ENCODE measurements at regions of chr9 and their contacts with region 1.

Region 1: GRCh38 chr9:272251-273213 is 57.9 kb downstream of the DOCK8 start:
- DNase-seq: peak; percentile 36 to 92 (median 72)
- ATAC-seq: peak; percentile 86 to 95 (median 94)
- H3K4me3 ChIP-seq: peak overlapping the region; percentile 71 to 72
- H3K4me3 Mint-ChIP-seq: peak overlapping the region; percentile 73 to 94 (median 90)
- H3K27ac ChIP-seq: peak overlapping the region; percentile 98
- H3K27ac Mint-ChIP-seq: peak overlapping the region; percentile 85 to 96
- H3K4me1 ChIP-seq: peaks cover 34 to 48% of the 10 kb centered on the region in 2 experiments
- H3K4me1 Mint-ChIP-seq: peaks cover 45 to 65% (median 51%) of the 10 kb centered on the region in 3 donors
- H3K27me3 ChIP-seq: no peaks in the 10 kb centered on the region
- H3K27me3 Mint-ChIP-seq: no peaks in the 10 kb centered on the region

Region 2: DNA sequence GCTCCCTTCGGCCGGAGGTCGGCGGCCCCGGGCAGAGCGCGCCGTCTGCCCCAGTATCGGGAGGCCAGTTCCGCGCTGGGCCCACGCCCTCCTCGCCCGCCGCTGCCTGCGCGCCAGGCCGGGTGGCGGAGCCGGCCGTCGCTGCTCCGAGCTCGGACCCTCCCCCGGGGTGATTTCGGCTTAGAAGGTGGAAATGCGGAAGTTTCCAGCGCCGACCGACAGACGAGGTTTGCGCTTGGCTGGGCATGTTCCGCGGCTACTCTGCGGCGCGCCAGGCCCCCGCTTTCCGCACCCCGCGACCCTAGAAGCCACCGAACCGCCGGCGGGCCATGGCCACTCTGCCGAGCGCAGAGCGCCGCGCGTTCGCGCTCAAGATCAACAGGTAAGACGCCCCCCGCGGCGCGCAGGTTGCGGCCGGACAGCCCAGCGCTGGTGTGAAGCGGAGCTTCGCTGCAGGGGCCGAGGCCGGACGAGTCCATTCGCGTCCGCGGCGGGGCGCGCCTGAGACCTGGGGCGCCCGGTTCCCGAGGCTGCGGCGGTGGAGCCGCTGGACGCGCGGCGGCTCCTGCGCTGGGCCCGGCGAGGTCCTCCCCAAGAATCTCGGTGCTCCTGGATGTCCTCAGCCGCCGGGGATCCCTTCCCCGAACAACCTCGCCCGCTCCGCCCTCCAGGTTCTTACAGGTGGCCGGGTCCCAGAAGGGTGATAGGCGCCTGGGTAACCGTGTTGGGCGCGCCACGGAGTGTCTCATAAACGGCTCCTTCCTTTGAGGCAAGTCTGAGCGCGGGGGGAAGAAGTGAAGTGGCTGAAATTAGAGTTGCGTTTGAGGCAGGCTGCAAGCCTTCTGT is 57.7 kb before region 1 on chr9 and contains the start of gene DOCK8:
- CTCF ChIA-PET with region 1: interaction called in 1 of 2 experiments, 14 read pairs
- POLR2A ChIA-PET with region 1: interaction called in 1 of 2 experiments, 4 read pairs
- DNase-seq: peak; percentile 9 to 70 (median 34)
- ATAC-seq: peak; percentile 80 to 83 (median 82)
- H3K4me3 ChIP-seq: peak within 1 kb of the TSS; percentile 58 to 64
- H3K4me3 Mint-ChIP-seq: peak within 1 kb of the TSS; percentile 79 to 90 (median 81)
- H3K27ac ChIP-seq: peak within 1 kb of the TSS; percentile 16
- H3K27ac Mint-ChIP-seq: peak within 1 kb of the TSS; percentile 42 to 57
- H3K4me1 ChIP-seq: peaks cover 3 to 16% of the 10 kb centered on the region in 2 experiments
- H3K4me1 Mint-ChIP-seq: peaks cover 11 to 29% (median 15%) of the 10 kb centered on the region in 3 donors
- H3K27me3 ChIP-seq: peaks cover 0 to 3% of the 10 kb centered on the region in 2 experiments
- H3K27me3 Mint-ChIP-seq: peaks cover 0 to 6% of the 10 kb centered on the region in 2 donors
- total RNA-seq, gene DOCK8: 173 to 231 (median 208) TPM

Region 3: DNA sequence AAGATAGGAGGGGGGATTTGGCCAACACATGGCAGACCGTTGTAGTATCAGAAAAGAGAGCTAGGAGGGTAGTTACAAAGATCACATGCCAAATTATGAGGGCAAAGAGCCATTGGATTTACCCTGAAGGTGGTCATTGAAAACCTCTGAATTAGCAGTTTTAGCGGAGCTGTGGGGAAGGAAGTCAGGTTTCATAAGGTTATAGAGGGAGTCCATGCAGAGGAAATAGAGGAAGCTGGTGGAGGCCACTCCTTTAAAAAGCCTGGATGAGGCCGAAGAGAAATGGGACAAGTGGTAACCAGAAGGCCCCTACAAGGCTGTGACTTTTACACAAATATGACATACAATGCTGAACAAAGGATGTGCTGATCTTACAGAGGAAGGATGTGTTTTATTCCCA is 44.7 kb before region 1 on chr9:
- CTCF ChIA-PET with region 1: no interaction called
- POLR2A ChIA-PET with region 1: no interaction called
- DNase-seq: no peak
- ATAC-seq: no peak
- H3K4me3 ChIP-seq: no peak overlapping the region
- H3K4me3 Mint-ChIP-seq: no peak overlapping the region
- H3K27ac ChIP-seq: no peak overlapping the region
- H3K27ac Mint-ChIP-seq: no peak overlapping the region
- H3K4me1 ChIP-seq: peaks cover 0 to 3% of the 10 kb centered on the region in 2 experiments
- H3K4me1 Mint-ChIP-seq: peaks cover 7% of the 10 kb centered on the region in 3 donors
- H3K27me3 ChIP-seq: no peaks in the 10 kb centered on the region
- H3K27me3 Mint-ChIP-seq: no peaks in the 10 kb centered on the region

Region 4: DNA sequence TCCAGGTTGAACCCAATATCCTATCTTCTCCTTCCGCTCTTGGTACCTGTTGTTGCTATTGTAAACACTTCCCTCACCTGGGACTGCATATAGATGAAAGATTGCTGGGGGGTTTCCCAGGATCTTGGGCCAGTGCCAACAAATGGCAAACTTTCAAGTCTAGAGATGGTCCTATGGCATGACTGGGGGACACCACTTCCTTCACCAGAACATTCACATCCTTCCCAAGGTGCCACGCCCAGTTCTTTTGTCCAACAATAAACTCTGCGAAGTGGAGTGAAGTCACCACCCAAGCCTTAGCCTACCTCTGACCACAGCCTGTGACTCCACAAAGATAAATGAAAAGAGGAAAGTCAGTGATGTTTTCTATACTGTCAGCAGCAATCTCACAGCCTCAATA is 23.5 kb before region 1 on chr9:
- CTCF ChIA-PET with region 1: no interaction called
- POLR2A ChIA-PET with region 1: no interaction called
- DNase-seq: peak in 20 of 35 experiments; percentile 2 to 57 (median 12)
- ATAC-seq: peak in 2 of 4 experiments; percentile 24 to 78
- H3K4me3 ChIP-seq: no peak overlapping the region
- H3K4me3 Mint-ChIP-seq: no peak overlapping the region
- H3K27ac ChIP-seq: no peak overlapping the region
- H3K27ac Mint-ChIP-seq: peak overlapping the region in 1 of 2 donors; percentile 74
- H3K4me1 ChIP-seq: peaks cover 0 to 8% of the 10 kb centered on the region in 2 experiments
- H3K4me1 Mint-ChIP-seq: peaks cover 3 to 22% (median 15%) of the 10 kb centered on the region in 3 donors
- H3K27me3 ChIP-seq: no peaks in the 10 kb centered on the region
- H3K27me3 Mint-ChIP-seq: peaks cover 0 to 3% of the 10 kb centered on the region in 2 donors

Region 5: DNA sequence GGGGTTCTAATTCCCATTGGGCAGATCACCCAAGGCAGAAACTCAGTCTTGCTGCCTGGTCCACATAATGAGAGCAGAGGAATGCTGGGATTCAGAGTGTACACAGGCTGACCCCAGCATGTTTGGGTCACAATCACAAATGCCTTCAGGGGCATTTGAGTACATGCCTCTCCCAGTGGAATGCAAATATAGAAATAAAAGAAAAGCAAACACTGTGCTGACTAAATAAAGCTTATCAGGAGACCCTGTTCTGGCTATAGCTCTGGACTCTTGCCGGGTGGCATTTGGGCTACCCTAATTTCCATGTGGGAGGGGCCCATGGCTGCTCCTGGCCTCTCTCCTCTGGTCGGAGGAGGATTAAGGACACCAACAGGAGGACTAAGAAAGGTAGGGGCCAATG is 63.5 kb after region 1 on chr9:
- CTCF ChIA-PET with region 1: no interaction called
- POLR2A ChIA-PET with region 1: no interaction called
- DNase-seq: no peak
- ATAC-seq: no peak
- H3K4me3 ChIP-seq: no peak overlapping the region
- H3K4me3 Mint-ChIP-seq: no peak overlapping the region
- H3K27ac ChIP-seq: no peak overlapping the region
- H3K27ac Mint-ChIP-seq: peak overlapping the region; percentile 71 to 91
- H3K4me1 ChIP-seq: peaks cover 0 to 4% of the 10 kb centered on the region in 2 experiments
- H3K4me1 Mint-ChIP-seq: peaks cover 17 to 28% (median 19%) of the 10 kb centered on the region in 3 donors
- H3K27me3 ChIP-seq: no peaks in the 10 kb centered on the region
- H3K27me3 Mint-ChIP-seq: no peaks in the 10 kb centered on the region